AG04450 (cell line): ENCODE measurements at regions of chr3 and their contacts with region 1.

Region 1: GRCh38 chr3:155323063-155323666 is 29.7 kb upstream of the STRIT1 start:
- DNase-seq: peak; percentile 64
- H3K4me3 ChIP-seq: no peak overlapping the region
- H3K27ac ChIP-seq: no peak overlapping the region
- H3K27me3 ChIP-seq: peaks cover 4% of the 10 kb centered on the region
- CTCF ChIP-seq: peak; percentile 78

Region 2: GRCh38 chr3:154334973-154335420 is 988.2 kb before region 1 on chr3:
- CTCF ChIA-PET with region 1: interaction called, 10 read pairs
- POLR2A ChIA-PET with region 1: no interaction called
- DNase-seq: peak; percentile 16
- H3K4me3 ChIP-seq: no peak overlapping the region
- H3K27ac ChIP-seq: no peak overlapping the region
- H3K27me3 ChIP-seq: peaks cover 5% of the 10 kb centered on the region
- CTCF ChIP-seq: peak; percentile 61

Region 3: DNA sequence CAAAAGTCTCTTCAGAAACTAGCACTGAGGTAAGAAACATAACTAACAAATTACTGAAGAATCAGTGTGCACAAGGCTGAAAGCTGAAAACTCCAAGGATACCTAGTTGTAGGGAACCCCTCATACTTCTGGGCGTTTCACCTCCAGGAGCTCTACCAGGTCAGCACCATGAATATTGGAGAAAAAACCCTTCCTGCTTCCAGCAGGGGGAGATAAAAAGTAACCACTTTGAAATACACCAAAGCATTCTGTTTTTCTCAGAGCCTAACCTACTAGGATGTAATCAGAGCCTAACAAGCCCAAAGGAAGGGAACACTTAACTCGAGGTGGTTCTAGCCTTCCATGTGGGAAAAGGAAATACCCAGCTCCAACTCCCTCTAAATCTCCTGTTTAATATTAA is 418.8 kb before region 1 on chr3:
- CTCF ChIA-PET with region 1: interaction called, 19 read pairs
- POLR2A ChIA-PET with region 1: no interaction called
- DNase-seq: no peak
- H3K4me3 ChIP-seq: no peak overlapping the region
- H3K27ac ChIP-seq: no peak overlapping the region
- H3K27me3 ChIP-seq: no peaks in the 10 kb centered on the region
- CTCF ChIP-seq: peak; percentile 55

Region 4: GRCh38 chr3:154954753-154955152 is 368.4 kb before region 1 on chr3:
- CTCF ChIA-PET with region 1: interaction called, 43 read pairs
- POLR2A ChIA-PET with region 1: no interaction called
- DNase-seq: peak; percentile 13
- H3K4me3 ChIP-seq: no peak overlapping the region
- H3K27ac ChIP-seq: no peak overlapping the region
- H3K27me3 ChIP-seq: no peaks in the 10 kb centered on the region
- CTCF ChIP-seq: peak; percentile 60

Region 5: DNA sequence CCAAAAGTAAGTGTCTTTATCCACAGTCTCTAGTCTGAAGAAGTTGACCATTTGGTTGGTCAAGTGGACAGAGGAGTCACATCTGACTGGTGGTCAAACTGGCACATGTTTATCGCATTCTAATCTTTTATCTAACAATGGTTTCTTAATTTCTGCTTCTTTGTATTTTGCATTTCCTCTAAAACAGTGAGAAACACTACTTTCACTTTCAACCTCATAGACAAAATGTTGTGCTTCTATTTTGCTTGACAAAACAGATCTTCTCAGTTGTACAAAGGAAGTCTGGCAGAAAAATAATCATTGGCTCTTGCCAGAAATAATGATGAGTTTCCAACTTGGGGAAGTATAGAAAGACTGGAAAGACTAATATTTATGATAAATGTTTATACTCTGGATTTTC is 139.2 kb before region 1 on chr3:
- CTCF ChIA-PET with region 1: interaction called, 13 read pairs
- POLR2A ChIA-PET with region 1: no interaction called
- DNase-seq: no peak
- H3K4me3 ChIP-seq: no peak overlapping the region
- H3K27ac ChIP-seq: no peak overlapping the region
- H3K27me3 ChIP-seq: no peaks in the 10 kb centered on the region
- CTCF ChIP-seq: no peak

Region 6: DNA sequence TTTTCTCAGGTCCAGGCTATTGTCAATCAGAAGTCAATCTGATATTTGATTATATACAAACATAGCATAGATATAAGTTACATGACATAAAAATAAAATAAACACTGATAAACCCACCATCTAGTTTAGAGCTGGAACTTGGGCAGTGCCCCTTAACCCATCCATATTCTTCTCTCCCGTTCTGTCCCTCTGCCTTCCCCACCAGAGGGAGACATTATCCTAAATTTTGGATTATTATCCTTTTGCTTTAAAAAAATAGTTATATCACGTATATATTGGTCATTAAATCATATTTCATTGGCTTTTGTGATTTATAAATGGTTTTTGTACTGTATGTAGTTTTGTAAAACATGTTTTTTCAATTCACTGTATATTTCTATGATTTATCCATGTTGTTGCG is 655.2 kb after region 1 on chr3:
- CTCF ChIA-PET with region 1: no interaction called
- POLR2A ChIA-PET with region 1: no interaction called
- DNase-seq: no peak
- H3K4me3 ChIP-seq: no peak overlapping the region
- H3K27ac ChIP-seq: no peak overlapping the region
- H3K27me3 ChIP-seq: no peaks in the 10 kb centered on the region
- CTCF ChIP-seq: peak; percentile 41